Activated CD8-positive, alpha-beta T cell treated with anti-CD3 and anti-CD28 coated beads for 36 hours (primary cell): ENCODE measurements at regions of chr11 and their contacts with region 1.

Region 1: DNA sequence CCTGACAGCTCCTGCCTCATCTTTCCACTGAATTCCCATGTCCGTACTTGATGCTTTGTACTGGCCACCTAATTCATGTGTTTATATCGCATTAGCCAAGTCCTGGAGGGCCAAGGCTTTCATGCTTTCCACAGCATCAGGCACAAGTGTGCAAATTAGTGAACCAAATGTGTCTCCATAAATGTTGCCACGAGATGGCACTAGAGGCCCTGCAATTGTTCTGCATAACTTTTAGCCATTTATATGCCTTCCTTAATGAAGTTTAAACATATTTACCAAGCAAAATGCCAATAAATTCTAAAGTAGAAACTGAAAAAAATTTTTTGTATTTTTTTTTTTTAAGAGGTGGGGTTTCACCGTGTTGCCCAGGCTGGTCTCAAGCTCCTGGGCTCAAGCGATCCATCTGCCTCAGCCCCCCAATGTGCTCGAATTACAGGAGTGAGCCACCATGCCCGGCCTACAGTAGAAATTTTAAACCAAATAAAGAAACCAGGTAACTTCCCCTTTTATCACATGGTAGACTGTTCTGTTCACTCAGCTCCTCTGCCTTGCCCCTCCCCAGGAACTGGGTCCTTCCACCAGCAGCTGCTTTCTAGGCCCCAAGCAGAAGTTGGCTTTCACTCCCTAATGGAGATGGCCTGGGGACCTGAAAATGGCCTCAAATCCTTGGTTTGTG is 20.8 kb upstream of the IL18BP start:
- DNase-seq: peak; percentile 72
- ATAC-seq: peak; percentile 65
- H3K4me3 Mint-ChIP-seq: no peak overlapping the region
- H3K27ac Mint-ChIP-seq: no peak overlapping the region
- H3K4me1 Mint-ChIP-seq: no peaks in the 10 kb centered on the region
- H3K27me3 Mint-ChIP-seq: no peaks in the 10 kb centered on the region
- CTCF ChIP-seq: peak; percentile 65

Region 2: GRCh38 chr11:71928737-71929452 is 49.0 kb before region 1 on chr11 and contains the start of gene RNF121:
- CTCF ChIA-PET with region 1: interaction called, 10 read pairs
- POLR2A ChIA-PET with region 1: interaction called, 6 read pairs
- intact Hi-C with region 1: no loop called
- DNase-seq: peak; percentile 100
- ATAC-seq: peak; percentile 88
- H3K4me3 Mint-ChIP-seq: peak within 1 kb of the TSS; percentile 95
- H3K27ac Mint-ChIP-seq: peak within 1 kb of the TSS; percentile 99
- H3K4me1 Mint-ChIP-seq: peaks cover 44% of the 10 kb centered on the region
- H3K27me3 Mint-ChIP-seq: no peaks in the 10 kb centered on the region
- CTCF ChIP-seq: no peak
- total RNA-seq, gene RNF121: 23.7 to 28.1 TPM

Region 3: DNA sequence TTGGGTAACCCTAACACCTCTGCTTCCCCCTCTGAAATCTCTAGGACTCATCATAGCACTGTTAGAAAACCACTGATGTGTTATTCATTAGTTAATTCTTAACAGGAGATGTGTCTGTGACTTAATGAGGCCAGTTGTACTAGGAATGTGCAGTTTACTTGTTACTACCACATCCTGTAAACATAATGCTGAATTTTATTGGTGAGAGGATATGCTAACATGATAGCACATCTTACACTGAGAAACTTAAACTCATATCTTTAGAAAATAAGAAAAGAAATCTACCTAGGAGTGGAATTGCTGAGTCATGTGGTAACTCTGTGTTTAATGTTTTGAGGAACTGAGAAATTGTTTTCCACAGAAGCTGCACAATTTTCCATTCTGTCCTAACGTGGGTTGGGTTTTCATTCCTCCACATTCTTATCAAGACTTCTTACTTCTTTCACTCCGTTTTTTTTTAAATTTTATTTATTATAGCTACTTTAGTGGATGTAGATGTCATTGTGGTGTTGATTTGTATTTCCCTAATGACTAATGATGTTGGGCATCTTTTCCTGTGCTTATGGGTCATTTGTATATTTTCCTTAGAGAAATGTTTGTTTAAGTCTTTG is 15.3 kb before region 1 on chr11:
- CTCF ChIA-PET with region 1: interaction called, 13 read pairs
- POLR2A ChIA-PET with region 1: no interaction called
- intact Hi-C with region 1: no loop called
- DNase-seq: no peak
- ATAC-seq: peak; percentile 70
- H3K4me3 Mint-ChIP-seq: no peak overlapping the region
- H3K27ac Mint-ChIP-seq: peak overlapping the region; percentile 79
- H3K4me1 Mint-ChIP-seq: peaks cover 25% of the 10 kb centered on the region
- H3K27me3 Mint-ChIP-seq: no peaks in the 10 kb centered on the region
- CTCF ChIP-seq: no peak

Region 4: GRCh38 chr11:71998662-71999310 is 20.9 kb after region 1 on chr11 and contains the start of gene IL18BP:
- CTCF ChIA-PET with region 1: interaction called, 11 read pairs
- POLR2A ChIA-PET with region 1: interaction called, 3 read pairs
- intact Hi-C with region 1: no loop called
- DNase-seq: peak; percentile 40
- ATAC-seq: peak; percentile 59
- H3K4me3 Mint-ChIP-seq: peak within 1 kb of the TSS; percentile 53
- H3K27ac Mint-ChIP-seq: peak within 1 kb of the TSS; percentile 87
- H3K4me1 Mint-ChIP-seq: peaks cover 20% of the 10 kb centered on the region
- H3K27me3 Mint-ChIP-seq: no peaks in the 10 kb centered on the region
- CTCF ChIP-seq: no peak
- total RNA-seq, gene IL18BP: 7.8 to 8.2 TPM

Region 5: GRCh38 chr11:72030472-72031045 is 52.7 kb after region 1 on chr11:
- CTCF ChIA-PET with region 1: interaction called, 18 read pairs
- POLR2A ChIA-PET with region 1: no interaction called
- intact Hi-C with region 1: no loop called
- DNase-seq: no peak
- ATAC-seq: no peak
- H3K4me3 Mint-ChIP-seq: no peak overlapping the region
- H3K27ac Mint-ChIP-seq: peak overlapping the region; percentile 79
- H3K4me1 Mint-ChIP-seq: peaks cover 55% of the 10 kb centered on the region
- H3K27me3 Mint-ChIP-seq: no peaks in the 10 kb centered on the region
- CTCF ChIP-seq: no peak

Region 6: GRCh38 chr11:72189461-72190275 is 211.8 kb after region 1 on chr11:
- CTCF ChIA-PET with region 1: interaction called, 16 read pairs
- POLR2A ChIA-PET with region 1: no interaction called
- intact Hi-C with region 1: no loop called
- DNase-seq: no peak
- ATAC-seq: no peak
- H3K4me3 Mint-ChIP-seq: no peak overlapping the region
- H3K27ac Mint-ChIP-seq: no peak overlapping the region
- H3K4me1 Mint-ChIP-seq: no peaks in the 10 kb centered on the region
- H3K27me3 Mint-ChIP-seq: no peaks in the 10 kb centered on the region
- CTCF ChIP-seq: no peak